ENCODE measurements at regions of chr7 and their contacts with region 1.

Region 1: GRCh38 chr7:129041142-129042085 is 13.5 kb downstream of the TNPO3 start:
- DNase-seq: no peak
- ATAC-seq: no peak
- H3K4me3 ChIP-seq: no peak overlapping the region
- H3K27ac ChIP-seq: no peak overlapping the region
- H3K4me1 ChIP-seq: peaks cover 0 to 3% of the 10 kb centered on the region in 2 donors
- H3K27me3 ChIP-seq: no peaks in the 10 kb centered on the region

Region 2: GRCh38 chr7:128443831-128444600 is 597.4 kb before region 1 on chr7:
- intact Hi-C with region 1: loop called in 1 of 2 experiments (anchors 5 kb)
- DNase-seq: no peak
- ATAC-seq: no peak
- H3K4me3 ChIP-seq: no peak overlapping the region
- H3K27ac ChIP-seq: no peak overlapping the region
- H3K4me1 ChIP-seq: no peaks in the 10 kb centered on the region
- H3K27me3 ChIP-seq: no peaks in the 10 kb centered on the region

Region 3: DNA sequence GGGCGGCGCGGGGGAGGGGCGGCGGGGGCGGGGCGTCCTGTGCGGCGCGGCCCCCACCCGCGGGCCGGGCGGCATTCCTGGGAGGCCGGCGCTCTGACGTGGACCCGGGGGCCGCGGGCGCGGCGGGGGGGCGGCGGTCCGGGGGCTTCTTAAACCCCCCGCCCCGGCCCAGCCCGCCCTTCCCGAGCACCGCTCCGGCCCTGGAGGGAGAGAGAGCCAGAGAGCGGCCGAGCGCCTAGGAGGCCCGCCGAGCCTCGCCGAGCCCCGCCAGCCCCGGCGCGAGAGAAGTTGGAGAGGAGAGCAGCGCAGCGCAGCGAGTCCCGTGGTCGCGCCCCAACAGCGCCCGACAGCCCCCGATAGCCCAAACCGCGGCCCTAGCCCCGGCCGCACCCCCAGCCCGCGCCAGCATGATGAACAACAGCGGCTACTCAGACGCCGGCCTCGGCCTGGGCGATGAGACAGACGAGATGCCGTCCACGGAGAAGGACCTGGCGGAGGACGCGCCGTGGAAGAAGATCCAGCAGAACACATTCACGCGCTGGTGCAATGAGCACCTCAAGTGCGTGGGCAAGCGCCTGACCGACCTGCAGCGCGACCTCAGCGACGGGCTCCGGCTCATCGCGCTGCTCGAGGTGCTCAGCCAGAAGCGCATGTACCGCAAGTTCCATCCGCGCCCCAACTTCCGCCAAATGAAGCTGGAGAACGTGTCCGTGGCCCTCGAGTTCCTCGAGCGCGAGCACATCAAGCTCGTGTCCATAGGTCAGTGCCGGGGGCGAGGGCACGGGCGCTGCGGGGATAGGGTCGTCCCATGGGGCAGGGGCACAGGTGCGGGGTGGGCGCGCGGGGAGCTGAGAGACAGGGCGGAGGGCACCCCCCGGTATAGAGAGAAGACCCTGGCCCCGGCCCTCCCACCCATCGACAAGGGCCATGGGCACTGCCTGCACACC is 210.9 kb before region 1 on chr7 and contains the start of gene FLNC:
- intact Hi-C with region 1: no loop called
- DNase-seq: peak; percentile 76 to 91
- ATAC-seq: peak; percentile 8
- H3K4me3 ChIP-seq: peak within 1 kb of the TSS; percentile 40 to 68
- H3K27ac ChIP-seq: peak within 1 kb of the TSS; percentile 7 to 81
- H3K4me1 ChIP-seq: no peaks in the 10 kb centered on the region
- H3K27me3 ChIP-seq: no peaks in the 10 kb centered on the region
- total RNA-seq, gene FLNC: 135 to 245 TPM